Psoas muscle (tissue), 8 donors: ENCODE measurements at regions of chr9 and their contacts with region 1.

Region 1: DNA sequence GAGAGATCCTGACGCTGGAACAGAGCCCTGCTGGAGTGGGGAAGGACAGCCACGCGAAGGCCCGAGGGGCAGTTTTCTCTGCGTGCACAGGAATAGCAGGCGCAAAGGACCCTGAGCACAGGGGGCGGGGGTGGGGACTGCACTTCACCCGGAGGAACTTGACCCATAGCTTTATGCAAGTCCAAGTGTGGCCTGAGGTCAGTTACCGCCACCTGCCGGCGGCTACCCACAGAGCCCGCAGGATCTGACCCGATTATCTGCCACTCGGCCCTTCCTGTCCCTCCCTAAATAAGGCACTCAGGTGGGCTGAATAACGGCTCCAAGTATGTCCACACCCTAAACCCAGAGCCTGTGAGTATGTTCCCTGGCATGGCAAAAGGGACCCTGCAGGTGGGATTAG is 65.4 kb upstream of the FCN1 start:
- DNase-seq: peak in 1 of 2 donors; percentile 30
- ATAC-seq: peak in 1 of 4 donors; percentile 37
- H3K4me3 ChIP-seq: no peak overlapping the region
- H3K27ac ChIP-seq: no peak overlapping the region
- H3K4me1 ChIP-seq: no peaks in the 10 kb centered on the region
- H3K27me3 ChIP-seq: peaks cover 0 to 13% (median 0%) of the 10 kb centered on the region in 3 donors
- CTCF ChIP-seq: peak; percentile 41

Region 2: DNA sequence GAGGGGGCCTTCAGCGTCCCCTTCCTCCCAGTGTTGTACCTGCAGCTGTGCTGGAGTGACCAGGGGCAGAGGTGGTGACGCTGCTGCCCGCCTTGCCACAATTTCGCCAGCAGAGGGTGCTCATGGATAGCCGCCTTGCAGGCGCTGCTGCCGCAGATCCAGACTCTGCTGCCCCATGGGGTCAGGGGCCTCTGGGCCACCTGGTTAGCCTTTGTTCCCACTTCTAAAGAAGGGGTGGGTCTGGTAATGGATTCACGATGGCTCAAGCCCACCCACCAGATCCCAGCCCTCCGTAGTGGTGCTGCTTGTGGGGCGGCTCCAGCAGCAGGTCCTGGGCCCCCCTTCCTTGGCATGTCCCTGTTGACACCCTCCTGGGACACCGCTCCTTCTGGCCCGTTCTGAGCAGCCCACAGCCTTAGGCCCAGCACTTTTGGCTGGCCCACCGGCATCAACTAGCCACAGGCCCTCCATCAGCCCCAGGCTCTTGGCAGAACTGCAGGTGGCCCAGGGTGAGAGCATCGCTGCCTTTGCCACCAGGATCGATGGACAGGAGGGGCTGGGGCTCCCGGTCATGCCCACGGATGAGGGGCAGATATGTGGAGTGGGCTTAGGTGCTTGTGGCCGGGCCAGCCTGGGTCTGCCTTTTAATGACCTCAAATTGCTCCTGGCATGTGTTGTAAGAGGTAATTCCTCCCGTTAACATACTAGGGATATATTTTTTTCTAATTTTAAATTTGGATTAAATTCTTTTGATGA is 284.3 kb before region 1 on chr9:
- intact Hi-C with region 1: loop called in 1 of 2 experiments (anchors 2 kb)
- DNase-seq: peak; percentile 63 to 83
- ATAC-seq: peak; percentile 64 to 77 (median 70)
- H3K4me3 ChIP-seq: no peak overlapping the region
- H3K27ac ChIP-seq: no peak overlapping the region
- H3K4me1 ChIP-seq: no peaks in the 10 kb centered on the region
- H3K27me3 ChIP-seq: peaks cover 0 to 18% (median 9%) of the 10 kb centered on the region in 3 donors
- CTCF ChIP-seq: peak; percentile 74

Region 3: GRCh38 chr9:134778841-134779411 is 204.1 kb before region 1 on chr9:
- intact Hi-C with region 1: loop called (anchors 2 to 10 kb)
- DNase-seq: peak in 1 of 2 donors; percentile 65
- ATAC-seq: peak; percentile 44 to 77 (median 72)
- H3K4me3 ChIP-seq: no peak overlapping the region
- H3K27ac ChIP-seq: no peak overlapping the region
- H3K4me1 ChIP-seq: no peaks in the 10 kb centered on the region
- H3K27me3 ChIP-seq: peaks cover 0 to 17% (median 10%) of the 10 kb centered on the region in 3 donors
- CTCF ChIP-seq: peak; percentile 56

Region 4: GRCh38 chr9:135010921-135011320 is 27.8 kb after region 1 on chr9:
- intact Hi-C with region 1: no loop called
- DNase-seq: peak in 1 of 2 donors; percentile 32
- ATAC-seq: no peak
- H3K4me3 ChIP-seq: no peak overlapping the region
- H3K27ac ChIP-seq: no peak overlapping the region
- H3K4me1 ChIP-seq: no peaks in the 10 kb centered on the region
- H3K27me3 ChIP-seq: peaks cover 0 to 46% (median 7%) of the 10 kb centered on the region in 3 donors
- CTCF ChIP-seq: no peak